ENCODE measurements at regions of chr13 and their contacts with region 1.

Region 1: GRCh38 chr13:48769107-48769704 is 115.5 kb downstream of the CYSLTR2 start:
- DNase-seq: peak; percentile 93
- ATAC-seq: peak; percentile 100
- H3K4me3 Mint-ChIP-seq: no peak overlapping the region
- H3K27ac Mint-ChIP-seq: no peak overlapping the region
- H3K4me1 Mint-ChIP-seq: peaks cover 14% of the 10 kb centered on the region
- H3K27me3 Mint-ChIP-seq: peaks cover 7% of the 10 kb centered on the region
- CTCF ChIP-seq: peak; percentile 100

Region 2: DNA sequence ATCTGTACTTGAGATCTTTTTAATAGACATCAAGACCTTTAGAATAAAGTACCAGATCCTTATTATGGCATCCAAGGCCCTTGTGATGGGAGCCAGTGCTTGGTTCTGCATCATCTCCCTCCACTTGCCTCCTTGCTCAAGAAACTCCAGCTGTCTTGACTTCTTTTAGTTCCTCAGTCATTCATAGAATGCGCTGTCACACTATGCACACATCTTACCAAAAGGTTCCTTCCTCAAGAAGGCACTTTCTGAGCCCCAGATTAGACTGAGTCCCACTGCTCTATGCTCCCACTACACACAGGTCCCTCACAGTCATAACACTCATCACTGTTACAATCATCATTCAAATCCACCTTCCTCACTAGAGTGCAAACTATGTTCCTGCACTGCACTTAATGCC is 594.0 kb before region 1 on chr13:
- CTCF ChIA-PET with region 1: no interaction called
- POLR2A ChIA-PET with region 1: no interaction called
- intact Hi-C with region 1: no loop called
- DNase-seq: no peak
- ATAC-seq: no peak
- H3K4me3 Mint-ChIP-seq: no peak overlapping the region
- H3K27ac Mint-ChIP-seq: no peak overlapping the region
- H3K4me1 Mint-ChIP-seq: no peaks in the 10 kb centered on the region
- H3K27me3 Mint-ChIP-seq: no peaks in the 10 kb centered on the region
- CTCF ChIP-seq: no peak

Region 3: GRCh38 chr13:48334534-48335127 is 434.6 kb before region 1 on chr13:
- CTCF ChIA-PET with region 1: interaction called, 19 read pairs
- POLR2A ChIA-PET with region 1: no interaction called
- intact Hi-C with region 1: loop called (anchors 10 kb)
- DNase-seq: no peak
- ATAC-seq: peak; percentile 58
- H3K4me3 Mint-ChIP-seq: no peak overlapping the region
- H3K27ac Mint-ChIP-seq: no peak overlapping the region
- H3K4me1 Mint-ChIP-seq: peaks cover 11% of the 10 kb centered on the region
- H3K27me3 Mint-ChIP-seq: no peaks in the 10 kb centered on the region
- CTCF ChIP-seq: peak; percentile 87

Region 4: DNA sequence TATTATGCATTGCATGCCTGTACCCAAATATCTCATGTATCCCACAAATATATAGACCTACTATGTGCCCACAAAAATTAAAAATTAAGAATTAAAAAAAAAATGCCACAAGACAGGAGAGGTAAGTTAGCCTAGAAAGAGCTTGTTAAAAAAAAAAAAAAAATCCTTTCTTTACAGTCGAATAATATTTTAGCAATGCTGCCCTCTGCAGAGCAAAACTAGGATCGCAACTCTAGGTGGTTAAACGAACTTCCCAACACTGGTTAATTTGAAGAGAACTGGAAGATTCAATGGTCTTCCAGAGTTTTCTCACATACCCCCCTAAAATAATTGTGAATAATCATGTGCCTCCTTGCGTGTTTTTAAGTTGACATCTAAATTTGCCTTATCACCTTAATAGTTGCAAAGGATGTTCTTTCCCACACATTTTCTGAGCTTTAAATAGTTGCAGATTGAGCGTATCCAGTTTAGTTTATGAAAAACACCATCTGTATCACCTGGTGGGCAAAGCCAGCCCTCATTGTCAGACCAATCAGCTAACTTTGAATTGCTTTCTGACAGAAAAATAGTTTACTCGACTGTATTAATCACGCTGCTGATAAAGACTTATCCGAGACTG is 188.9 kb before region 1 on chr13:
- CTCF ChIA-PET with region 1: interaction called, 34 read pairs
- POLR2A ChIA-PET with region 1: no interaction called
- intact Hi-C with region 1: no loop called
- DNase-seq: peak; percentile 85
- ATAC-seq: peak; percentile 67
- H3K4me3 Mint-ChIP-seq: no peak overlapping the region
- H3K27ac Mint-ChIP-seq: no peak overlapping the region
- H3K4me1 Mint-ChIP-seq: peaks cover 3% of the 10 kb centered on the region
- H3K27me3 Mint-ChIP-seq: peaks cover 25% of the 10 kb centered on the region
- CTCF ChIP-seq: peak; percentile 90

Region 5: DNA sequence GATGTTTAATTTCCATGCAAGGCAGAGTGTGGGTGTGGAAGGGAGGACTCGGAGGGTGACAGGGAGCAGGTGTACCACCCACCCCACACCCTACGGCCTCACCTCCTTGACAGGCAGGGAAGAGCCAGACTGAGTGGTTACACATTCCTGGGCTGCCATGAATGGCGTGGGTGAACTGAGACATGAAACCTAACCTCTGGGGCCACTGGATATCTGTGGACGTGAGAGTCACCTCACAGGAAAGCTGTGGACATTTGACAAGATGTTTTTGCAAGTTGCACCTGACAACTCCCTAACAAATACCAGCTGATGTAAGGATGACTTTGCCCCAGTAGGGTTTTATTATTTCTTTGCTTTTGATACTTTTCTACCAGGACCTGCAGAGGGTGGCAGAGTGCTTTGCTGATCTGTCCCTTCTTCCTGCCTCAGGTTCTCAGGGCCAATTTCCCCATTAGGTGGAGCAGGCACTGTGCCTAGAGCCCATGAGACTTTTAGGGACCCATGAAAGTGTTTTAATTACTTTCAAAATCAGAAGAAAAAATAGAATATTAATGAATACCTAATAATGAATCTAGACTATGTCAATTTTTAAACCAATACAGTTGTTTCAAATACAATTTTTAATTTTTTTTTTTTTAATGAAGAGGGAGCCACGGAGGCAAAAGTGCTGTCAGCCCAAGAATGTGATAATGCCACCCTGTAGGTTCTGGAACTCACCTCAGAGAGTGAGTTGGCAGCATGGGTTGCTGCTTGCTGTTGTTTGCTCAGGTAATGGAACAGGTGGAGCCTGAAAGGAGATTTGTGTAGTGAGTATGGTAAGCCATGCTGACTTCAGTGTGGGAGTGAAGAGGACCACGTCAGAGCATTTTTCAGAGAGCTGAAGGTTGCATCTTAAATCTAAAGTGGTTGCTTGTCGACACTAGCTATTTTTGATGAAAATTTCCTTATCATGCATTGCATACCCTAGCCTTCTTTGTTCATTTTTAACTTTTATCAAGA is 173.5 kb before region 1 on chr13:
- CTCF ChIA-PET with region 1: interaction called, 92 read pairs
- POLR2A ChIA-PET with region 1: no interaction called
- intact Hi-C with region 1: loop called (anchors 2 kb)
- DNase-seq: peak; percentile 65
- ATAC-seq: peak; percentile 86
- H3K4me3 Mint-ChIP-seq: no peak overlapping the region
- H3K27ac Mint-ChIP-seq: no peak overlapping the region
- H3K4me1 Mint-ChIP-seq: peaks cover 6% of the 10 kb centered on the region
- H3K27me3 Mint-ChIP-seq: peaks cover 2% of the 10 kb centered on the region
- CTCF ChIP-seq: peak; percentile 60

Region 6: DNA sequence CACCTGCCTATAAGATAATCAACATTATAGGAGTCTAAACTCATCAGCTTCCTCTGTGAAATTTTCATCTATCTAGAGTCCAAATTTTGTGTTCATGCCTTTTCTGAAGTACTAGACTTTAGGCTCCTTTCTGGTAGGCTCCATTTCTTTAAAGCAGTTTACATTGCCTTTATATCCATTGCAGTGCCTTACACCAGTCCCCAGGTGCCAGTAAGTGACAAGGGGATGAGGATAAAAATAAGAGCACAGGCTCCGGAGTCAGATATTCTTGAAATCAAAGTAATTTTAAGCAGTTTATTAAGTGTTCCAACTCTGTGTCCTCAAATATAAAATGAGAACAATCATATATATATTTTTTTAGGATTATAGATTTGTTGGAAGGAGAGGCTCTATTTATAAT is 126.0 kb before region 1 on chr13:
- CTCF ChIA-PET with region 1: no interaction called
- POLR2A ChIA-PET with region 1: no interaction called
- intact Hi-C with region 1: loop called (anchors 5 kb)
- DNase-seq: no peak
- ATAC-seq: no peak
- H3K4me3 Mint-ChIP-seq: no peak overlapping the region
- H3K27ac Mint-ChIP-seq: no peak overlapping the region
- H3K4me1 Mint-ChIP-seq: no peaks in the 10 kb centered on the region
- H3K27me3 Mint-ChIP-seq: peaks cover 1% of the 10 kb centered on the region
- CTCF ChIP-seq: no peak

Region 7: DNA sequence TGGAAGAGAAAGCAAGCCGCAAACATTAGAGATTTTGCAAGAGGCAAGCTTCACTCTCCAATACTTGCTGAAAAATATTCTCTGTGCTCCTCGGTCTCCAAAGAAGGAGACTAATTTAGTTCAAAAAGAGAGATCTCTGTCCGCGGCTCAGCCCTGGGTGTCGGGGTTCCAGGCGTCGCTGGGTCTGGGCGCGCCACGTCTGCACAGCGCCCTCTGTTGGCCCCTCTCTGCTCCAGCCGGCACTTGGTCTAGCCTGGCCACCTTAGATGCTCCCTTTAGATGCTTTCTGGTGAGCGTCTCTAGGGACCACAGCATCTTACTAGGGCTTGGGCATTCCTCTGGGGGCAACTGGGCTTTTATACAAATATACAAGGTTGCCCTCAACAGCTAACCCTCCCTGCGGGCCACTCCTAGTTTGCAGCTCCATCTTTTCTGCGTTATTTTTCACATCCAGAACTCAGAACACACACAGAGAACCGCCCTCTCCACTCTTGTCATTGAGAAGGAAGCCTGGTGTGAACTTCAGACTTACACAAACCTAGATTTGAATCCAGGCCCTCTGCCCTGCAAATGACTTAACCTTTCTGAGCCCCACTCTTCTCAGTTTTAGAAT is 37.1 kb before region 1 on chr13:
- CTCF ChIA-PET with region 1: interaction called, 48 read pairs
- POLR2A ChIA-PET with region 1: no interaction called
- intact Hi-C with region 1: no loop called
- DNase-seq: peak; percentile 66
- ATAC-seq: peak; percentile 87
- H3K4me3 Mint-ChIP-seq: peak overlapping the region; percentile 48
- H3K27ac Mint-ChIP-seq: no peak overlapping the region
- H3K4me1 Mint-ChIP-seq: peaks cover 8% of the 10 kb centered on the region
- H3K27me3 Mint-ChIP-seq: peaks cover 4% of the 10 kb centered on the region
- CTCF ChIP-seq: peak; percentile 84

Region 8: DNA sequence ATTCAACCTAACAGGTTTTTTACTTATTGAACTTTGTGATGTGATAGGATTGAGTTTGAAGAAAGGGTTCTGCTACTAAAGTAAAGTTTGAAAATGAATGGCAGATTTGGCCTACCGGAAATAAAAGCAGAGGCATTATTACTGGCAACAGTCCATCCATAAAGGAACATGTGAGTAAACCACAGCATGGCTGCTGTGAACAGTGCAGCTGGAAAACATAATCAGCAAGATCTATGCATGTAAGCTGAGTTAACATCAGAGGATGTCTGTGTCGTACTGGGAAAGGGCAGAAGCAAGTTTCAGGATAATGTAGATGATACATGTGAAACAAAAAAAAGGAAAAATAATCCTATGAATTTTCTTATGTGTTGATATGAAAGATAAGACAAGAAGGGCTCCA is 27.8 kb before region 1 on chr13:
- CTCF ChIA-PET with region 1: interaction called, 13 read pairs
- POLR2A ChIA-PET with region 1: no interaction called
- intact Hi-C with region 1: no loop called
- DNase-seq: no peak
- ATAC-seq: no peak
- H3K4me3 Mint-ChIP-seq: no peak overlapping the region
- H3K27ac Mint-ChIP-seq: peak overlapping the region; percentile 5
- H3K4me1 Mint-ChIP-seq: peaks cover 7% of the 10 kb centered on the region
- H3K27me3 Mint-ChIP-seq: peaks cover 1% of the 10 kb centered on the region
- CTCF ChIP-seq: no peak

Measured in activated CD8-positive, alpha-beta T cell treated with anti-CD3 and anti-CD28 coated beads for 36 hours (primary cell).